IMR-90 (cell line): ENCODE measurements at regions of chr9 and their contacts with region 1.

Region 1: GRCh38 chr9:127199001-127199791 is 65.4 kb upstream of the GARNL3 start:
- DNase-seq: peak; percentile 82
- ATAC-seq: peak; percentile 85
- H3K4me3 ChIP-seq: no peak overlapping the region
- H3K27ac ChIP-seq: no peak overlapping the region
- H3K4me1 ChIP-seq: peaks cover 14% of the 10 kb centered on the region; the same call in 1 of the 2 replicates
- H3K27me3 ChIP-seq: no peaks in the 10 kb centered on the region
- CTCF ChIP-seq: peak; percentile 95
- POLR2A ChIP-seq: peak; percentile 57; the same call in 1 of the 2 replicates
- RAD21 ChIP-seq: peak; percentile 99

Region 2: DNA sequence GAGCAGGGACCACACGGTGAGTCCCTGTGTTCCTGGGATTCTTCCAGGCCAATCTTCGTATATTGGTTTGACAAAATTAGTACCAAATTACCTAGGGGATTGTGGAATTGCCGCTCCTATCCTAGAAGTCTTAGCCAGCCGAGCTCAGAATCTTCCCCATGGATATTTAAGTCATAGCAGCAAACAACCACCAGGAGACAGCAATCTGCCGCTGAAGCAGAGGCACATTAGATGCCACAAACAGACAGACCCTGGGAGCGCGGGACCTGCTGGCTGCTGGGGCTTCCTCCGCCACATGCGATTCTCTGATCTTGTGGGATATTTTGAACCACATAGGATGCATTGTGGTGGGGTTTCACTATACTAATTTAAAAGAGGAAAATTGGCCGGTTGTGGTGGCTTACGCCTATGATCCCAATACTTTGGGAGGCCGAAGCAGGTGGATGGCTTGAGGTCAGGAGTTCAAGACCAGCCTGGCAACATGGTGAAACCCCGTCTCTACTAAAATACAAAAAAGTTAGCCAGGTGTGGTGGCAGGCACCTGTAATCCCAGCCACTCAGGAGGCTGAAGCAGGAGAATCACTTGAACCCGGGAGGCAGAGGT is 426.1 kb before region 1 on chr9:
- CTCF ChIA-PET with region 1: no interaction called
- POLR2A ChIA-PET with region 1: no interaction called
- dilution Hi-C with region 1: no loop called
- in situ Hi-C with region 1: no loop called
- intact Hi-C with region 1: no loop called
- DNase-seq: peak; percentile 16
- ATAC-seq: peak; percentile 75
- H3K4me3 ChIP-seq: no peak overlapping the region
- H3K27ac ChIP-seq: no peak overlapping the region
- H3K4me1 ChIP-seq: no peaks in the 10 kb centered on the region
- H3K27me3 ChIP-seq: peaks cover 26% of the 10 kb centered on the region
- CTCF ChIP-seq: peak; percentile 50
- POLR2A ChIP-seq: no peak
- RAD21 ChIP-seq: peak; percentile 27; the same call in 1 of the 2 replicates

Region 3: GRCh38 chr9:126893079-126893478 is 306.1 kb before region 1 on chr9:
- CTCF ChIA-PET with region 1: no interaction called
- POLR2A ChIA-PET with region 1: no interaction called
- dilution Hi-C with region 1: no loop called
- in situ Hi-C with region 1: no loop called
- intact Hi-C with region 1: loop called (anchors 1 kb)
- DNase-seq: no peak
- ATAC-seq: no peak
- H3K4me3 ChIP-seq: no peak overlapping the region
- H3K27ac ChIP-seq: no peak overlapping the region
- H3K4me1 ChIP-seq: no peaks in the 10 kb centered on the region
- H3K27me3 ChIP-seq: no peaks in the 10 kb centered on the region
- CTCF ChIP-seq: peak; percentile 45; the same call in 1 of the 2 replicates
- POLR2A ChIP-seq: no peak
- RAD21 ChIP-seq: peak; percentile 41

Region 4: GRCh38 chr9:126939821-126940221 is 259.4 kb before region 1 on chr9:
- CTCF ChIA-PET with region 1: interaction called, 27 read pairs
- POLR2A ChIA-PET with region 1: no interaction called
- dilution Hi-C with region 1: no loop called
- in situ Hi-C with region 1: loop called (anchors 5 kb)
- intact Hi-C with region 1: loop called (anchors 1 kb)
- DNase-seq: no peak
- ATAC-seq: no peak
- H3K4me3 ChIP-seq: no peak overlapping the region
- H3K27ac ChIP-seq: no peak overlapping the region
- H3K4me1 ChIP-seq: peaks cover 2% of the 10 kb centered on the region; the same call in 1 of the 2 replicates
- H3K27me3 ChIP-seq: no peaks in the 10 kb centered on the region
- CTCF ChIP-seq: no peak
- POLR2A ChIP-seq: no peak
- RAD21 ChIP-seq: no peak

Region 5: DNA sequence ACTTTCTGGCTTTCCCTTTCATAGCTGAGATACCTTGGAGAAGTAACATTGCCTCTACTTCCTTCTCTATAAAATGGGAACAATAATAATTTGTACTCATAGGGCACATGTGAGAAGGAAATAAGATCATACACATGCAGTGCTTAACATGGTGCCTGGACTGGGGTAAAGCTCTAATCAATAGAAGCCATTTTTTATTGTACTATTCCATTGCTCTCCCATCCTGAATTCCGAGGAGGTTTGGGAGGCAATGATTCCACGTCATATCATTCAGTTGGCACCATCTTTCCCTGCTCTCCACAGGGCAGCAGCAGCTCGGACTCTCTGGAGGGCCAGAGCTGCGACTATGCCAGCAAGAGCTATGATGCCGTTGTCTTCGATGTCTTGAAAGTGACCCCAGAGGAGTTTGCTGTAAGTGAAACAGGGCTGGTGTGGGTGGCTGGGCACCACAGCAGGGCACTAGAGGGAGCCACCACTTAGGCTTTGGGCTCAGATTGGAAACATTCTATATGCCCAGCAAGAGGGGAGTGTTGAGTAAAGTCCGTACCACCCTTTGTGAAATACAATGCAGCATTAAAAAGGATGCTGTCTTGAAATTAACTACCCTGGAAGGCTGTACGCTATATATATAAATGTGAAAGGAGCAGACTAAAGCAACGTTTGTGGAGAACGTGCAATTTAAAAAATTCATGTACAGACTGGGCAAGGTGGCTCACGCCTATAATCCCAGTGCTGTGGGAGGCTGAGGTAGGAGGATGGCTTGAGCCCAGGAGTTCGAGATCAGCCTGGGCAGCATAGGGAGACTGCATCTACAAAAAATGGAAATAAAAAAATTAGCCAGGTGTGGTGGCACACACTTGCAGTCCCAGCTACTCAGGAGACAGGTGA is 233.4 kb before region 1 on chr9:
- CTCF ChIA-PET with region 1: interaction called, 6 read pairs
- POLR2A ChIA-PET with region 1: no interaction called
- dilution Hi-C with region 1: no loop called
- in situ Hi-C with region 1: loop called (anchors 10 kb)
- intact Hi-C with region 1: loop called (anchors 1 kb)
- DNase-seq: peak; percentile 61
- ATAC-seq: peak; percentile 95
- H3K4me3 ChIP-seq: no peak overlapping the region
- H3K27ac ChIP-seq: no peak overlapping the region
- H3K4me1 ChIP-seq: peaks cover 2% of the 10 kb centered on the region; the same call in 1 of the 2 replicates
- H3K27me3 ChIP-seq: no peaks in the 10 kb centered on the region
- CTCF ChIP-seq: peak; percentile 86
- POLR2A ChIP-seq: peak; percentile 31; the same call in 1 of the 2 replicates
- RAD21 ChIP-seq: peak; percentile 95

Region 6: GRCh38 chr9:127049044-127049443 is 150.2 kb before region 1 on chr9:
- CTCF ChIA-PET with region 1: no interaction called
- POLR2A ChIA-PET with region 1: no interaction called
- dilution Hi-C with region 1: no loop called
- in situ Hi-C with region 1: no loop called
- intact Hi-C with region 1: loop called (anchors 2 kb)
- DNase-seq: peak; percentile 97
- ATAC-seq: peak; percentile 93
- H3K4me3 ChIP-seq: no peak overlapping the region
- H3K27ac ChIP-seq: peak overlapping the region; percentile 6; the same call in 1 of the 2 replicates
- H3K4me1 ChIP-seq: peaks cover 4% of the 10 kb centered on the region
- H3K27me3 ChIP-seq: no peaks in the 10 kb centered on the region
- CTCF ChIP-seq: peak; percentile 34
- POLR2A ChIP-seq: no peak
- RAD21 ChIP-seq: peak; percentile 12

Region 7: GRCh38 chr9:127104465-127105311 is 94.5 kb before region 1 on chr9:
- CTCF ChIA-PET with region 1: no interaction called
- POLR2A ChIA-PET with region 1: no interaction called
- dilution Hi-C with region 1: no loop called
- in situ Hi-C with region 1: no loop called
- intact Hi-C with region 1: loop called (anchors 5 kb)
- DNase-seq: peak; percentile 32
- ATAC-seq: no peak
- H3K4me3 ChIP-seq: no peak overlapping the region
- H3K27ac ChIP-seq: no peak overlapping the region
- H3K4me1 ChIP-seq: peaks cover 22% of the 10 kb centered on the region
- H3K27me3 ChIP-seq: no peaks in the 10 kb centered on the region
- CTCF ChIP-seq: no peak
- POLR2A ChIP-seq: no peak
- RAD21 ChIP-seq: no peak

Region 8: DNA sequence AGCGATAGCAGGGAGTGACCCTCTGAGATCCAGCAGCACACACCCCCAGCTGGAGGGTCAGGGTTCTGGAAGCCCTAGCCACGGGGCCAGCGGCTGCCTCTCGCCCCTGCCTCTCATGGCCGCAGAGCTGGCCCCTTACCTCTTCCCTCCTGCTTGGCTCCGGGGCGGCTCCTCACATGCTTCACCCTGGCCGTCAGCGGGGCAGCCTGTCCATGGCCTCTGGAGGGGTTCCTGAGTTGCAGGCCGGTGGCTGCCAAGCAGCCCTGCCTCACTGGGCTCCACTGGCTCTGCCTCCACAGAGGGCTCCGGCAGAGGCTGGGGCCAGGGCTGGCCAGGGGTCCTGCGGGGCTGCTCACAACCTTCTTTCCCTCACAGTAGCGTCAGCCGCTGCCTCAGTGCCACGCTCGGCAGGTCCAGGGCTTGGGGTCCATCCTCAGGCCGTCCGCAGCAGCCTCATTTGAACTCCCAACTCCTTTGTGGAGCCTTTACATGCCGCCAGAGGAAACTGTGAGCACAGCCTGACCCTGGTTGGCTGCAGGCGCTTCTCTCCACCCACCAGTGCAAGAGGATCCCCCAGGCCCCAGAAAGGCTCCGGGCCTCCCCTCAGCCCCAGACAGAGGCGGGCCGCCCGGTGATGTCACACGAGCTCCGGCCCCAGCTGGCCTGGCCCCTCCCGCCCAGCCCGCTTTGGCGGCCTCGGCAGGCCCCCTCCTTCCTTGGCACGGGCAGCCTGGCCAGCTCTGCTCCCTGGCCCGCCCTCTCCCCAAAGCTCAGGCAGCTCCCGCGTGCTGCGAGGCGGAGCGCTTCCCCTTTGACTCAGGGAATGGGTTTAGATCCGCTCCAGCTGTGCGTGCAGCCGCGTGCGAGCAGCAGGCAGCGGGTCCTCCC is 76.8 kb before region 1 on chr9 and contains the start of gene ANGPTL2:
- CTCF ChIA-PET with region 1: interaction called, 4 read pairs
- POLR2A ChIA-PET with region 1: interaction called, 8 read pairs
- dilution Hi-C with region 1: no loop called
- in situ Hi-C with region 1: no loop called
- intact Hi-C with region 1: loop called (anchors 1 kb)
- DNase-seq: peak; percentile 95
- ATAC-seq: peak; percentile 92
- H3K4me3 ChIP-seq: peak within 1 kb of the TSS; percentile 69
- H3K27ac ChIP-seq: peak within 1 kb of the TSS; percentile 83
- H3K4me1 ChIP-seq: peaks cover 27% of the 10 kb centered on the region
- H3K27me3 ChIP-seq: no peaks in the 10 kb centered on the region
- CTCF ChIP-seq: no peak
- POLR2A ChIP-seq: peak; percentile 94
- RAD21 ChIP-seq: peak; percentile 3
- total RNA-seq, gene ANGPTL2: 9.5 and 14.7 TPM in 2 replicates

Region 9: DNA sequence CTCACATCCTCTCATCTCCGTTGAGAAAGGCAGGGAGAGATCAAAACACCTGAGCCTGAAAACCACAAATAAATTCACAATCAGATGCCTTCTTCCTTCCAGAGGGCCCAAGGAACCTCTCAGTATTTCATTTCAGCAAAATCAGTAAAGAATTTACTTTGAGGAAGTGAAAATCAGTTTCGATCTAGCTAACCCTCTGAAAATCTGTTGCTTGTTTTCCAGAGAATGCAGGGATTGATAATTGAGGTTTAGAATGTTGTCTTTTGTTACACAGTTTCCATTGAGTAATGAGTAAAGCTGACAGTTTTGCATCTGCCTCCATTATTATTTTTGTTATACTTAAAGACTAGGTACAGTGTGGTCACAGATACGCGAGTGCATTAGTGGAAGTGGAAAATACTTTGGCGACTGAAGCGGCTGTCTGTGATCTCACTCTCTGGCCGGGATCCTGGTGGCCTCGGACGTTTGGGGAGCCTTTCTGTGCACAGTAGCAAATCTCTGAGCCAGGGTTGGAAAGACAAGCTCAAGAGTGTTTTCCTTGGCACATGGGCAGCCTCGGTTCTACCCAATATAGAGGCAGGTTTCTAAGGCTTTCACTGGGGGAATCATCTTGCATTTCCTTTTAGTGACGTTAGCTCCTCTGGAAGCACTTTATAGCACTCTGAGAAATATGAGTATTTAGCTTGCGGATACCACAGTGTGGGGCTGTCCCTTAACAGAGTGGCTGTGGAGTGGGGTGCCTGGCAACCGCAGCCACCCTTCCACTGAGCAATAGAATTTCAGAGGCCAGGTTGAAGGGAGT is 44.6 kb before region 1 on chr9:
- CTCF ChIA-PET with region 1: no interaction called
- POLR2A ChIA-PET with region 1: no interaction called
- dilution Hi-C with region 1: no loop called
- in situ Hi-C with region 1: no loop called
- intact Hi-C with region 1: no loop called
- DNase-seq: peak; percentile 35
- ATAC-seq: no peak
- H3K4me3 ChIP-seq: no peak overlapping the region
- H3K27ac ChIP-seq: no peak overlapping the region
- H3K4me1 ChIP-seq: peaks cover 8% of the 10 kb centered on the region
- H3K27me3 ChIP-seq: no peaks in the 10 kb centered on the region
- CTCF ChIP-seq: no peak
- POLR2A ChIP-seq: no peak
- RAD21 ChIP-seq: no peak

Region 10: DNA sequence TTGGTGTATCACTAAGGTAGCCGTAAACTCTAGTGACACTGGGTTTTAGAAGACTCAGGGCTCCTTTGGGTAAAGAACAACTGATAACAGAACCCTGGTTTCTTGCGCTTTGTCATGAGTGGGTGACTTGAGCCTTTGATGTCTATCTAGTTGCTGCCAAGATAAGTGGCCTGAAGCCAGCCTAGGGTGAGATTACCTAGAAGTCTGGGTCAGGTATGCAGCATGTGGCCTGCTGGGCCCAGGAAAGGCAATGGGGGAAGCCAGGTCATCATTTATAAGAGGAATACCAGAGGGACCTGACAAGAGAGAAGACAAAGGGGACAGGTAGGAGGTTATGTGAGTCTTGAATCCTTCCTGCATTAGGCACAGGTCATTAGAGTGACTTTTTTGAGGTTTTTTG is 42.2 kb after region 1 on chr9:
- CTCF ChIA-PET with region 1: no interaction called
- POLR2A ChIA-PET with region 1: no interaction called
- dilution Hi-C with region 1: no loop called
- in situ Hi-C with region 1: no loop called
- intact Hi-C with region 1: no loop called
- DNase-seq: no peak
- ATAC-seq: no peak
- H3K4me3 ChIP-seq: no peak overlapping the region
- H3K27ac ChIP-seq: no peak overlapping the region
- H3K4me1 ChIP-seq: no peaks in the 10 kb centered on the region
- H3K27me3 ChIP-seq: no peaks in the 10 kb centered on the region
- CTCF ChIP-seq: no peak
- POLR2A ChIP-seq: no peak
- RAD21 ChIP-seq: no peak